B cell (primary cell): ENCODE measurements at regions of chr6 and their contacts with region 1.

Region 1: DNA sequence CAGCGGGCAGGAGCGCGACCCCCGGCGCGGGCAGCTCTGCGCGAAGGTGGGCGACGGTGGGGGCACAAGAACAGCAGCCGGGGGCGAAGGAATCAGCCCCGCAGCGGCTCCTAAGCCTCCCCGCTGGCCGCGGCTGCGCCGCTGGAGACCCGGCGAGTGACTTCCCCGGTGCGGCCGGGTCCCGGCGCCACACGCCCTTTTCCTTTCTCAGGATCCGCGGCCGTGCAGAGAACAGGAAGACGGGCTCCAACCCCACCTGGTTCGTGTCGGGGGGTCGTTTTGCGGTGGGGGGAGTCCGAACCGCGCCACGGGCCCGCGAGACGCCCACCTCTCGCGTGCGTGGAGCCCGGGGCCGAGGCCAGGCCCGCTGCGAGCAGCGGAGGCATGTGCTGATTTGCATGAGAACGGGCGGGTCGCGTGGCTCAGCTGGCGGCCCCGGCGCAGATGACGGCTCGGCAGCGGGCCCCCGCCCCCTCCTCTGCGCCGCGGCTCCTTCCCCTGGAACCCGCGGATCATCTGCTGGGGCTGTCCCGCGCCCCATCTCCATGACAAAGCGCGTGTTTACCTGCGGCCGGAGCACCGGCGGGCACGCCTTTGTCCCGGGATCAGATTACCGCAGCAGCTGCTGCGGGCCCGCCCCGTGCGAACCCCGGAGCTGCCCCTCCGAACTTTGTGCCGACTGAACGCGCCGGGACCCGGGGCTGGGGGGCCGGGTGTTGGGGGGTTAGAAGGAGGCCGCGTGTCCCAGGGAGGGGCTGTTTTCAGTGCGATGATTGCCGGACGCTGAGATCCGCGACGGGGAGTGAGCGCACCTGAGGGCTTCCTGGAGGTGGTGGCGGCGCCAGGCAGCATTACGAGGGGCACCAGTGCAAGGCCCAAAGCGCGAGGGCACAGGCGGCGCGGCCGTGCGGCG is 4.9 kb upstream of the DLL1 start:
- DNase-seq: peak; percentile 87
- ATAC-seq: peak; percentile 68
- H3K4me3 ChIP-seq: peak overlapping the region; percentile 7 to 70 (median 49)
- H3K4me3 Mint-ChIP-seq: peak overlapping the region; percentile 85
- H3K27ac ChIP-seq: no peak overlapping the region
- H3K27ac Mint-ChIP-seq: peak overlapping the region; percentile 46
- H3K4me1 ChIP-seq: peaks cover 48 to 69% of the 10 kb centered on the region in 2 donors
- H3K4me1 Mint-ChIP-seq: peaks cover 43% of the 10 kb centered on the region
- H3K27me3 ChIP-seq: peaks cover 0 to 88% (median 59%) of the 10 kb centered on the region in 4 experiments
- H3K27me3 Mint-ChIP-seq: peaks cover 71% of the 10 kb centered on the region
- CTCF ChIP-seq: no peak

Region 2: DNA sequence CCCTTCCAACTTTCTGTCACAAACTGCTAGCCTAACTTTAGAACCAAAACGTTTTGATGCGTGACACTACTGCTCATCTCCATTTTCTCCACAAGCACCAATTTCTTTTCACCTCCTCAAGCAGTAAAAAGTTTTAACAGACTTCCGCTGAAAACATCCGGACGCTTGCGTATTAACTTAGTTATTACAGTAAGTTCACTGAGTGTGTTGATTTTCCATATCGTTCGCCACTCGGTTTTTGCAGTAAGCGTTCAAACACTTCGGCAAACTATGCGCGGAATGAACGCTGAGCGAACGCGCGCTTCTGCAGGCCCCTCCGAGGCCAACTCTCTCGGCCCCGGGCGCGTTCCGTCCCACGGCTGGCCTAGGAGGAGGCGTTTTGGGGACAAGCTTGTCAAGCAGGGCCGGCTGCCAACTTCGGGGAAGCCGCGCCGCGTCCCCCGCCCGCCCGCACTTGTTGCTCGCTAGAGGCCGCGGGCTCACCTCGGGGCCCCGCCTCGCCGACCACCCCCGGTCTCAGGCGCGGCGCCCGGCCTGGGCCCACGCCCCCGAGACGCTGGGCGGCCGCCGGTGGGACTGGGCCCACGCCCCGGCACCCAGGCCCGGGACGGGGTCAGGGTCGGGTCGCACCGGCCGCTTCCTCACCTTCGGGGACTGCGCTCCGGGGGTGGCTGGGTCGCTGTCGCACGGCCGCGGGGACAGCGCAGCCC is 572.4 kb before region 1 on chr6:
- CTCF ChIA-PET with region 1: no interaction called
- POLR2A ChIA-PET with region 1: interaction called, 5 read pairs
- intact Hi-C with region 1: loop called (anchors 10 kb)
- DNase-seq: peak; percentile 85
- ATAC-seq: peak; percentile 39
- H3K4me3 ChIP-seq: peak overlapping the region; percentile 58 to 95 (median 77)
- H3K4me3 Mint-ChIP-seq: peak overlapping the region; percentile 90
- H3K27ac ChIP-seq: peak overlapping the region; percentile 77 to 88
- H3K27ac Mint-ChIP-seq: peak overlapping the region; percentile 89
- H3K4me1 ChIP-seq: peaks cover 17 to 18% of the 10 kb centered on the region in 2 donors
- H3K4me1 Mint-ChIP-seq: peaks cover 33% of the 10 kb centered on the region
- H3K27me3 ChIP-seq: no peaks in the 10 kb centered on the region
- H3K27me3 Mint-ChIP-seq: no peaks in the 10 kb centered on the region
- CTCF ChIP-seq: no peak

Region 3: GRCh38 chr6:169831450-169832246 is 464.1 kb before region 1 on chr6:
- CTCF ChIA-PET with region 1: interaction called, 14 read pairs
- POLR2A ChIA-PET with region 1: no interaction called
- intact Hi-C with region 1: loop called (anchors 2 kb)
- DNase-seq: peak; percentile 72
- ATAC-seq: no peak
- H3K4me3 ChIP-seq: no peak overlapping the region
- H3K4me3 Mint-ChIP-seq: no peak overlapping the region
- H3K27ac ChIP-seq: no peak overlapping the region
- H3K27ac Mint-ChIP-seq: no peak overlapping the region
- H3K4me1 ChIP-seq: peaks cover 0 to 6% of the 10 kb centered on the region in 2 donors
- H3K4me1 Mint-ChIP-seq: peaks cover 1% of the 10 kb centered on the region
- H3K27me3 ChIP-seq: peaks cover 0 to 12% (median 6%) of the 10 kb centered on the region in 4 experiments
- H3K27me3 Mint-ChIP-seq: peaks cover 28% of the 10 kb centered on the region
- CTCF ChIP-seq: peak; percentile 87

Region 4: GRCh38 chr6:169990095-169991030 is 305.4 kb before region 1 on chr6:
- CTCF ChIA-PET with region 1: interaction called, 3 read pairs
- POLR2A ChIA-PET with region 1: interaction called, 14 read pairs
- intact Hi-C with region 1: loop called (anchors 2 kb)
- DNase-seq: peak; percentile 63
- ATAC-seq: peak; percentile 72
- H3K4me3 ChIP-seq: peak overlapping the region in 4 of 5 experiments; percentile 9 to 40 (median 34)
- H3K4me3 Mint-ChIP-seq: peak overlapping the region; percentile 78
- H3K27ac ChIP-seq: peak overlapping the region in 1 of 2 donors; percentile 21
- H3K27ac Mint-ChIP-seq: no peak overlapping the region
- H3K4me1 ChIP-seq: peaks cover 30 to 34% of the 10 kb centered on the region in 2 donors
- H3K4me1 Mint-ChIP-seq: peaks cover 30% of the 10 kb centered on the region
- H3K27me3 ChIP-seq: no peaks in the 10 kb centered on the region
- H3K27me3 Mint-ChIP-seq: peaks cover 8% of the 10 kb centered on the region
- CTCF ChIP-seq: no peak

Region 5: GRCh38 chr6:170257376-170257775 is 38.4 kb before region 1 on chr6:
- CTCF ChIA-PET with region 1: no interaction called
- POLR2A ChIA-PET with region 1: interaction called, 13 read pairs
- intact Hi-C with region 1: no loop called
- DNase-seq: no peak
- ATAC-seq: no peak
- H3K4me3 ChIP-seq: no peak overlapping the region
- H3K4me3 Mint-ChIP-seq: no peak overlapping the region
- H3K27ac ChIP-seq: no peak overlapping the region
- H3K27ac Mint-ChIP-seq: no peak overlapping the region
- H3K4me1 ChIP-seq: no peaks in the 10 kb centered on the region
- H3K4me1 Mint-ChIP-seq: no peaks in the 10 kb centered on the region
- H3K27me3 ChIP-seq: peaks cover 0 to 8% (median 0%) of the 10 kb centered on the region in 4 experiments
- H3K27me3 Mint-ChIP-seq: peaks cover 24% of the 10 kb centered on the region
- CTCF ChIP-seq: no peak

Region 6: GRCh38 chr6:170360476-170360875 is 64.7 kb after region 1 on chr6:
- CTCF ChIA-PET with region 1: no interaction called
- POLR2A ChIA-PET with region 1: no interaction called
- intact Hi-C with region 1: no loop called
- DNase-seq: no peak
- ATAC-seq: no peak
- H3K4me3 ChIP-seq: no peak overlapping the region
- H3K4me3 Mint-ChIP-seq: no peak overlapping the region
- H3K27ac ChIP-seq: no peak overlapping the region
- H3K27ac Mint-ChIP-seq: no peak overlapping the region
- H3K4me1 ChIP-seq: no peaks in the 10 kb centered on the region
- H3K4me1 Mint-ChIP-seq: no peaks in the 10 kb centered on the region
- H3K27me3 ChIP-seq: no peaks in the 10 kb centered on the region
- H3K27me3 Mint-ChIP-seq: no peaks in the 10 kb centered on the region
- CTCF ChIP-seq: no peak